ENCODE measurements at regions of chr11 and their contacts with region 1.

Region 1: GRCh38 chr11:133086518-133086917 is 445.8 kb downstream of the OPCML start:
- DNase-seq: no peak
- H3K4me3 ChIP-seq: no peak overlapping the region
- H3K27ac ChIP-seq: no peak overlapping the region
- H3K4me1 ChIP-seq: peaks cover 8% of the 10 kb centered on the region
- H3K27me3 ChIP-seq: no peaks in the 10 kb centered on the region
- CTCF ChIP-seq: no peak
- POLR2A ChIP-seq: no peak

Region 2: GRCh38 chr11:131172011-131172410 is 1914.5 kb before region 1 on chr11:
- intact Hi-C with region 1: loop called (anchors 5 kb)
- DNase-seq: no peak
- H3K4me3 ChIP-seq: no peak overlapping the region
- H3K27ac ChIP-seq: no peak overlapping the region
- H3K4me1 ChIP-seq: no peaks in the 10 kb centered on the region
- H3K27me3 ChIP-seq: no peaks in the 10 kb centered on the region
- CTCF ChIP-seq: no peak
- POLR2A ChIP-seq: no peak

Region 3: GRCh38 chr11:133040289-133040900 is 46.1 kb before region 1 on chr11:
- intact Hi-C with region 1: no loop called
- DNase-seq: no peak
- H3K4me3 ChIP-seq: no peak overlapping the region
- H3K27ac ChIP-seq: no peak overlapping the region
- H3K4me1 ChIP-seq: no peaks in the 10 kb centered on the region
- H3K27me3 ChIP-seq: no peaks in the 10 kb centered on the region
- CTCF ChIP-seq: no peak
- POLR2A ChIP-seq: no peak

Region 4: GRCh38 chr11:133228471-133229329 is 142.2 kb after region 1 on chr11:
- intact Hi-C with region 1: no loop called
- DNase-seq: no peak
- H3K4me3 ChIP-seq: no peak overlapping the region
- H3K27ac ChIP-seq: no peak overlapping the region
- H3K4me1 ChIP-seq: no peaks in the 10 kb centered on the region
- H3K27me3 ChIP-seq: no peaks in the 10 kb centered on the region
- CTCF ChIP-seq: no peak
- POLR2A ChIP-seq: no peak

Region 5: GRCh38 chr11:133285359-133285758 is 198.8 kb after region 1 on chr11:
- intact Hi-C with region 1: no loop called
- DNase-seq: no peak
- H3K4me3 ChIP-seq: no peak overlapping the region
- H3K27ac ChIP-seq: no peak overlapping the region
- H3K4me1 ChIP-seq: no peaks in the 10 kb centered on the region
- H3K27me3 ChIP-seq: no peaks in the 10 kb centered on the region
- CTCF ChIP-seq: no peak
- POLR2A ChIP-seq: no peak

Measured in vagina (tissue), 2 donors.